Right ventricle myocardium inferior (tissue), 1 donor: ENCODE measurements at regions of chr2 and their contacts with region 1.

Region 1: DNA sequence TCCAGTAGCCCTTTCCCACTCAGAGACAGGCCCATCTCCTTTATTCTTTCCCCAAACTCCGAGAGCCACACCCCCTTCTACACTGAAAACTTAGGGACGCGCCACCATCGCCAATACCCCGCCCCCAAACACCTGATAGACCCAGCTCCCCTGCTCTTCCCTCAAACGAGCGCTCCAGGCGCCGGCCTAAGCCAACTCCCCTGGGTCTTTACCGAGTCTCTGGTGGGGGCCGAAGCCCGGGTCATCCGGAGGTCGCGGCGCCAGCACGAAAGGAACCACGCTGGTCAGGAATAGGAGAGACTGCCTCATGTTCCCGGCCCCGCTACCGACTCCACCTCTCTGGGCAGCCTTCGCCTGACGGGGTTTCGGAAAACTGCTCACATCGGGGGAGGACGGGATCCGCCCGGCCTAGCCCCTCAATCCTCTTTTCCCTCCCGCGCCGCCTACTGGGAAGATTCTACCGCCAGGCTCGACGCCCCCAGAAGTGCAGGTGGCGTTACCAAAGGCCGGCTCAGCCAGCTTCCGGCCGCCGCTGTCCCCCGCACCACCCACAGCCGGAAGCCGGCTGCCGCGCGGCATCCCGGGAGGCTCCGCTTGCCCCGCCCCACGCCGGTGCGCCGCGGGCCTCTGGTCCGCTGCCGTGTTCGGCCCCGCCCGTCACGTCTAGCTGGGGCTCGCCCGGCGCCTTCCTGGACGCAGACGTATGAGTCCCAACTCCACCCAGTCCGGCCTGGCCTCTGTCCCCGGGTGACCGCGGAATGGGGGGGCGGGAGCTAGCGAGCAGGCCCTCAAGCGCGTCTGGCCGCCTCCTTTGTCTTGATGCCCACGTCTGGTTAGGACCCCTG is at the start of gene ADAM17:
- DNase-seq: peak; percentile 100
- ATAC-seq: peak; percentile 98
- total RNA-seq, gene ADAM17: 13.5 TPM

Region 2: GRCh38 chr2:9601397-9601796 is 45.9 kb after region 1 on chr2:
- intact Hi-C with region 1: loop called (anchors 5 kb)
- DNase-seq: no peak
- ATAC-seq: no peak